PC-3 (cell line): ENCODE measurements at regions of chr18 and their contacts with region 1.

Region 1: GRCh38 chr18:23805898-23806297 is 116.6 kb downstream of the LAMA3 start:
- DNase-seq: peak; percentile 41
- ATAC-seq: peak; percentile 42
- H3K4me3 ChIP-seq: no peak overlapping the region
- H3K27ac ChIP-seq: no peak overlapping the region
- H3K4me1 ChIP-seq: no peaks in the 10 kb centered on the region
- H3K27me3 ChIP-seq: no peaks in the 10 kb centered on the region
- CTCF ChIP-seq: no peak

Region 2: DNA sequence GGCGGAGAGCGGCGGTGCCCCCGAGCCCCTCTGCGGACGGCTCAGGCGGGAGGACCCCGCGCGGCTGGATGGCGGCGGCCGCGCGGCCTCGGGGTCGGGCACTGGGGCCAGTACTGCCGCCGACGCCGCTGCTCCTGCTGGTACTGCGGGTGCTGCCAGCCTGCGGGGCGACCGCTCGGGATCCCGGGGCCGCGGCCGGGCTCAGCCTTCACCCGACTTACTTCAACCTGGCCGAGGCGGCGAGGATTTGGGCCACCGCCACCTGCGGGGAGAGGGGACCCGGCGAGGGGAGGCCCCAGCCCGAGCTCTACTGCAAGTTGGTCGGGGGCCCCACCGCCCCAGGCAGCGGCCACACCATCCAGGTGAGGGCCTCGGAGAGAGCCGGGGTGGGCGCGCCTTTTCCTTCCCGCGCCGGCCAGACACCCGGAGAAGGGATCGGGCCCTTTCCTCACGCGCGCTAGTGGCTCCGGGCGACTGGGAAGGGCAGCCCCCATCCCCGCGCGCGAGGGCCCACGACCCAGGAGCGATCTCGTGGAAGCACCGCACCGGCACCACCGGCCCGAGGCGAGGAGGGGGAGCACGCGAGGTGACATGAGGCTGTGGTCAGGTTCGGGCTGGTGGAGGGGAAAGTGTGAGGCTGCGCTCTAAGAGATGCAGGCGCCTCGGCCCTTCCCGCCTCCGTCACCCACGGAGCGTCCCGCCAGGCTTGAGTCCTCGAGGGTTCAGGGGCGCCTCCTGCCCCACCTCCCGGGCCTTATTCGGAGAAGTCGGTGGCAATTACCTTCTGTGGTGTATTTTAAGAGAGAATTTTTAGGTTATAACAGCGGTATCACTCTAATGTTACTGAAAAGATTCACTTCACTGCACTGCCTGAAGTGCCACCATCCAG is 116.0 kb before region 1 on chr18:
- CTCF ChIA-PET with region 1: no interaction called
- POLR2A ChIA-PET with region 1: no interaction called
- intact Hi-C with region 1: no loop called
- DNase-seq: peak; percentile 42
- ATAC-seq: peak; percentile 26
- H3K4me3 ChIP-seq: peak overlapping the region; percentile 87
- H3K27ac ChIP-seq: peak overlapping the region; percentile 79
- H3K4me1 ChIP-seq: peaks cover 56% of the 10 kb centered on the region
- H3K27me3 ChIP-seq: no peaks in the 10 kb centered on the region
- CTCF ChIP-seq: no peak

Region 3: GRCh38 chr18:23719634-23720201 is 86.2 kb before region 1 on chr18:
- CTCF ChIA-PET with region 1: no interaction called
- POLR2A ChIA-PET with region 1: no interaction called
- intact Hi-C with region 1: loop called (anchors 5 kb)
- DNase-seq: peak; percentile 98
- ATAC-seq: peak; percentile 93
- H3K4me3 ChIP-seq: no peak overlapping the region
- H3K27ac ChIP-seq: peak overlapping the region; percentile 97
- H3K4me1 ChIP-seq: peaks cover 44% of the 10 kb centered on the region
- H3K27me3 ChIP-seq: no peaks in the 10 kb centered on the region
- CTCF ChIP-seq: no peak

Region 4: DNA sequence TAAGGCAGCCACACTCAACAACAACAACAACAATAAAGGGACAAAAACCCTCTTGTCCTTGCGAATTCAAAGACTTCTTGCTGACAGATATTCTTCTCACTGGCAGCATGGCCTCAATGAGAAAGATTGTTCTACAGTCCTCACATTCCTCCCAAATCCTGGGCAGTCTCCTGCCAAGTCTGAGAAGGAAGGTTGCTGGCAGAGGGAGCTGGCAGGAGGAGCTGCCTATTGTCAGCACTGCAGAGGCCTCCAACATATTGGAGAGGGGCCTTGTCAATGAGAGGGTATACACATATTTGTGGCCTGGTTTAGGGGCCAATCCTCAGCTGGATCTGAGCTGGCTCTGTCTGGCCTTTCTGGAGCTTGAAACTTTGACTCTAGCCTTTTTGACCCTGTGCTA is 53.1 kb before region 1 on chr18:
- CTCF ChIA-PET with region 1: no interaction called
- POLR2A ChIA-PET with region 1: no interaction called
- intact Hi-C with region 1: no loop called
- DNase-seq: no peak
- ATAC-seq: no peak
- H3K4me3 ChIP-seq: no peak overlapping the region
- H3K27ac ChIP-seq: no peak overlapping the region
- H3K4me1 ChIP-seq: no peaks in the 10 kb centered on the region
- H3K27me3 ChIP-seq: no peaks in the 10 kb centered on the region
- CTCF ChIP-seq: no peak